ENCODE measurements at regions of chr16 and their contacts with region 1.

Region 1: DNA sequence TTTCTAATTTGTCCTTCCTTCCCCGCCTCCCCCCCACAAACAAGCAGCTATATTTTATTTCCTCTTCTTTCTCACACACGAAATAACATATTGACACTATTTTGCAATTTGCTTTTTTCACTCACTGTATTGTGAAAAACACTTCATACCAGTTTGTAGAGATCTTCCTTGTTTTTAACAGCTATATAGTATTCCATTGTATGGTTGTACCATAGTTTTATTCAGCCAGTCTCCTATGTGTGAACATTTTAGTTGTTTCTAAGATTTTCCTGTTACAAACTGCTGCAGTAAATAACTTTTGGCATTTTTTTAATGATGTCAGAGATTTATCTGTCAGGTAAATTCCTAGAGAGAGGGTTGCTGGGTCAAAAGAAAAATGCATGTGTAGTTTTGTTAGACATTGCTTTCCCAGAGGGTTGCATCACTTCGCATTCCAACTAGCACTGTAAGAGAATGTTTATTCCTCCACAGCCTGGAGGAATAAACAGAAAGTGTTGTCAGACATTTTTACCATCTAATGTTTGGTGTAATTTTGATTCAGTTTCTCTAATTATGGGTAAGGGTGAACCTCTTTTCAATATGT is 101.2 kb downstream of the MRTFB start:
- DNase-seq: no peak
- H3K4me3 ChIP-seq: no peak overlapping the region
- H3K27ac ChIP-seq: no peak overlapping the region
- H3K4me1 ChIP-seq: no peaks in the 10 kb centered on the region
- H3K27me3 ChIP-seq: no peaks in the 10 kb centered on the region
- CTCF ChIP-seq: no peak
- POLR2A ChIP-seq: no peak

Region 2: GRCh38 chr16:14111713-14112540 is 60.4 kb before region 1 on chr16:
- intact Hi-C with region 1: loop called (anchors 5 kb)
- DNase-seq: peak; percentile 74
- H3K4me3 ChIP-seq: no peak overlapping the region
- H3K27ac ChIP-seq: peak overlapping the region; percentile 4 to 9
- H3K4me1 ChIP-seq: no peaks in the 10 kb centered on the region
- H3K27me3 ChIP-seq: no peaks in the 10 kb centered on the region
- CTCF ChIP-seq: no peak
- POLR2A ChIP-seq: no peak

Measured in prostate gland (tissue), 2 donors.